HepG2 (cell line): ENCODE measurements at regions of chr10 and their contacts with region 1.

Region 1: DNA sequence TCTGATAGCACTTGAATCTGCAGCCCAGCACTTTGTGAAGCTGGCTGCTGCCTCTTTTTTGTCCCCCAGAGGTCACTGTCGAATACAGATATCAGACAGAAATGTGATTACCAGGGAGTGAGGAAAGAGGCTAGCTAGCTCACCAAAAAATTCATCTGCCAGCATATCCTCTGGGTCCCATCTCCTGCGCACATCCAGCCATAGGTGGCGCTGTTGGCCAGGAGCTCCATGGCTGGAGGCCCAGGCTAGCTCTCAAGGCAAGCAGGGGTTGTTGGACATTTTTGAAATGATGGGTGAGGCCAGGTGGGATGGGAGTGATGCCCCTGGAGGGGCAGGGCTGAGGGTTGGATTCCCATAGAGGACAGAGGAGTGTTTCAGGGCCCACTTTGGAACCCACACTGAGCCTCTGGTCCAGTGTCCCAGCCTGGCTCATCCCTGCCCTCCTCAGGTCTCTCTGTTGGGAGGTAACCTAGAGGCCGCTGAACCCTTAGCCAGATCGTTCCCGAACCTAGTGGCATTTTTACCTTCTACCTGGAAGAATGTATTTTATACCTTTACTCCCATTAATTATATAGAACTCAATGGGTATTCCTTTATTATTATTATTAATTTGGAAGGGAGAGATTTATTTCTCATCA is 14.8 kb downstream of the DPCD start:
- DNase-seq: peak; percentile 70
- ATAC-seq: peak; percentile 96
- H3K4me3 ChIP-seq: no peak overlapping the region
- H3K27ac ChIP-seq: no peak overlapping the region
- H3K4me1 ChIP-seq: peaks cover 9% of the 10 kb centered on the region; the same call in 1 of the 2 replicates
- H3K27me3 ChIP-seq: no peaks in the 10 kb centered on the region
- CTCF ChIP-seq: peak; percentile 96
- EP300 ChIP-seq: no peak
- POLR2A ChIP-seq: no peak
- RAD21 ChIP-seq: peak; percentile 79

Region 2: GRCh38 chr10:101710059-101710695 is 107.3 kb after region 1 on chr10:
- CTCF ChIA-PET with region 1: no interaction called
- POLR2A ChIA-PET with region 1: no interaction called
- in situ Hi-C with region 1: no loop called
- intact Hi-C with region 1: loop called (anchors 1 kb)
- DNase-seq: no peak
- ATAC-seq: peak; percentile 68
- H3K4me3 ChIP-seq: no peak overlapping the region
- H3K27ac ChIP-seq: no peak overlapping the region
- H3K4me1 ChIP-seq: no peaks in the 10 kb centered on the region
- H3K27me3 ChIP-seq: peaks cover 2 to 3% of the 10 kb centered on the region in 2 experiments; a peak in 3 of 5 replicates
- CTCF ChIP-seq: no peak
- EP300 ChIP-seq: no peak
- POLR2A ChIP-seq: no peak
- RAD21 ChIP-seq: no peak

Region 3: DNA sequence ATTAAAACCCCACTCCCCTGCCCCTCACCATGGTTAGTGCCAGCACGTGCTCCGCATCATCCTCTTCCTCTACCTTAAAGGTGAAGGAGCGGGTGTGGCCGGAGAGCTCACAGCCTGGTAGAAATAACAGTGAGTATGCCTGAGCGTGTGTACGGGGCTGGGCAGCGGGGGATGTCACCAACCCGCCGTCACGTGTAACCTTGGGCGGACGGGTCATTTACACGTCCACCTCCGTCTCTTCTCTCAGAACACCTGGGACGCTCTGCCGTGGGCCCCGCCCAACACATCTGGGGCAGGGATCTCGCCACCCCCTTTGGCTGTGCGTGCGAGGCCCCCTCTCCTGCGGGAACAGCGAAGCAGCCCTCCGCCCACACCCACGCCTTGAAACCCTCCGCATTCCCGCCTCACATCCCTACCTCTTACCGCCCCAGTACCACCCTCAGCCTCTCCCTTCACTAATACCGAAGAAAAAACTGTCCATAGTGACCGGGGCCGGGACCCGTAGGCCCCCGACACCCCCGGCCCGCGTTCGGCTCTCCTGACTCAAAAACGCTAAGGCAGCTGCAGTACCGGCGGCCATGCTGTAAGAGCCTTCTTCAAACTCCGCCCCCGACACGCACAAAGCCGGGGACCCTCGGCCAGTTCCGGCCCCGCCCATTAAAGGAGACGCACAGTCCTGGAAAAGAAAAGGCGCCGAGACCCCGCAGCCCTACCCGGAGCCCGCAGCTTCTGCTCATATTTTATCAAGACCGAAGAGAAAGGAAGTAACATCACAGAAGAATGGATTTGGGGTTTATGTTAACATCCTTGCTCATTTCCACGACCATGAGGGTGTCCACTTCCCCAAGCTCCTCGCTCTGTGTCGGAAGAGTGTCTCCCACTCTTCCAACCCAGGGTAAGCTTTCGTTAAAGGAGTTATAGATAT is 180.2 kb after region 1 on chr10 and contains the start of gene NPM3:
- CTCF ChIA-PET with region 1: interaction called, 28 read pairs
- POLR2A ChIA-PET with region 1: interaction called, 3 read pairs
- in situ Hi-C with region 1: loop called (anchors 5 kb)
- intact Hi-C with region 1: loop called (anchors 1 kb)
- DNase-seq: peak; percentile 76
- ATAC-seq: peak; percentile 77
- H3K4me3 ChIP-seq: peak within 1 kb of the TSS; percentile 84 to 94 (median 88)
- H3K27ac ChIP-seq: peak within 1 kb of the TSS; percentile 55
- H3K4me1 ChIP-seq: peaks cover 50% of the 10 kb centered on the region
- H3K27me3 ChIP-seq: no peaks in the 10 kb centered on the region; a peak in 1 of 5 replicates
- CTCF ChIP-seq: no peak
- EP300 ChIP-seq: no peak
- POLR2A ChIP-seq: peak in 1 of 2 experiments; percentile 72
- RAD21 ChIP-seq: peak; percentile 4; the same call in 1 of the 2 replicates
- total RNA-seq, gene NPM3: 129 and 160 TPM in 2 replicates

Region 4: GRCh38 chr10:101938316-101939281 is 335.7 kb after region 1 on chr10:
- CTCF ChIA-PET with region 1: no interaction called
- POLR2A ChIA-PET with region 1: no interaction called
- in situ Hi-C with region 1: no loop called
- intact Hi-C with region 1: no loop called
- DNase-seq: no peak
- ATAC-seq: no peak
- H3K4me3 ChIP-seq: no peak overlapping the region
- H3K27ac ChIP-seq: no peak overlapping the region
- H3K4me1 ChIP-seq: no peaks in the 10 kb centered on the region
- H3K27me3 ChIP-seq: no peaks in the 10 kb centered on the region
- CTCF ChIP-seq: no peak
- EP300 ChIP-seq: no peak
- POLR2A ChIP-seq: no peak
- RAD21 ChIP-seq: no peak